Natural killer cell (primary cell): ENCODE measurements at regions of chr10 and their contacts with region 1.

Region 1: GRCh38 chr10:12448729-12449391 is 99.5 kb downstream of the CAMK1D start:
- DNase-seq: peak; percentile 64 to 95
- ATAC-seq: peak; percentile 88 to 94 (median 90)
- H3K4me3 ChIP-seq: peak overlapping the region; percentile 13
- H3K4me3 Mint-ChIP-seq: peak overlapping the region; percentile 79
- H3K27ac ChIP-seq: peak overlapping the region; percentile 66
- H3K27ac Mint-ChIP-seq: peak overlapping the region; percentile 95 to 96
- H3K4me1 ChIP-seq: peaks cover 19% of the 10 kb centered on the region
- H3K4me1 Mint-ChIP-seq: peaks cover 34 to 37% of the 10 kb centered on the region in 2 donors
- H3K27me3 ChIP-seq: no peaks in the 10 kb centered on the region
- H3K27me3 Mint-ChIP-seq: peaks cover 0 to 5% of the 10 kb centered on the region in 2 donors
- CTCF ChIP-seq: no peak

Region 2: DNA sequence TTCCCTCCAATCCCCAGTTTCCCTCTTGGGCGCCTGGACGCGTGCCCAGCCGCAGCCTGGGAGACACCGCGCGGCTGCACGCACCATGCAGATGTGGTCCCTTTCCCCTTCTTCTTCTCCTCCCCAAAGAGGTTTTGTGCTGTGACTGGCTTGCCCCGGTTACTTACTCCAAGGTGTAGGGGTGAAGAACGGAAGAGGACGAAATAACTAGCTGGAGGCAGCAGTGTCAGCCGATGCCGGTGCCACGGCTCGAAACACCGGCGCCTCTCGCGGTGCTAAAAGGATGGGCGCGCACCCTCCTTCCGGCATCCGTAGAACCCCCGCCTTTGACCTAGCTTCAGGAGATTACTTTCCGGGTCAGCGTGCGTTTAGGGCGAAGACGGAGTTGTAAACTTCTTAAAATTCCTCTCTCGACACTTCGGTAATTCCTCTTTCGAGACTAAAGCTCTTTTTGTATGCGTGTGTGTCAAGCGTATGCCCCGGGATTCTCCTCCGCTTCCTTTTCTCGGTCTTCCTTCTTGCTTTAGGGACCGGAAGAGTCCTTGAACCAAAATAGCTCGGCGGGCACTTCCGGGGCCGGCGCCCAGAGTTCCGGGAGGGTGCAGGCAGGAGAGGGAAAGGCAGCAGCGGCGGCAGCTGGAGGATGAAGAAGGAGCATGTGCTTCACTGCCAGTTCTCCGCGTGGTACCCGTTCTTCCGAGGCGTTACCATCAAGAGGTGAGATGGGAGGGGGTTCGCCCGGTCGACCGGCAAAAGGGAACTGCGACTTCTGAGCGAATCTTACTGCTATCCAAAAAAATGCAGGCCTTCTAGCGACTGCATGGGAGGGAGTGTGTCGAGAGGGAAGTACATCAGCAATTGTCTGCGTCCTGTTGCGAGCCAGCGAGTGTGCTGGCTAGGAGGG is 253.0 kb before region 1 on chr10 and contains the starts of genes CDC123 and NUDT5:
- intact Hi-C with region 1: loop called (anchors 2 kb)
- DNase-seq: peak; percentile 76 to 92
- ATAC-seq: peak; percentile 93 to 96 (median 94)
- H3K4me3 ChIP-seq: peak within 1 kb of the TSS; percentile 92
- H3K4me3 Mint-ChIP-seq: peak within 1 kb of the TSS; percentile 98
- H3K27ac ChIP-seq: peak within 1 kb of the TSS; percentile 93
- H3K27ac Mint-ChIP-seq: peak within 1 kb of the TSS; percentile 97 to 99
- H3K4me1 ChIP-seq: peaks cover 20% of the 10 kb centered on the region
- H3K4me1 Mint-ChIP-seq: peaks cover 48 to 55% of the 10 kb centered on the region in 2 donors
- H3K27me3 ChIP-seq: no peaks in the 10 kb centered on the region
- H3K27me3 Mint-ChIP-seq: no peaks in the 10 kb centered on the region
- CTCF ChIP-seq: no peak
- total RNA-seq, gene CDC123: 45.8 to 53.3 (median 47.6) TPM
- total RNA-seq, gene NUDT5: 25.7 to 39.1 (median 29.4) TPM

Region 3: GRCh38 chr10:12264204-12264940 is 184.5 kb before region 1 on chr10:
- intact Hi-C with region 1: loop called (anchors 2 kb)
- DNase-seq: peak; percentile 51 to 82
- ATAC-seq: peak; percentile 41 to 69 (median 51)
- H3K4me3 ChIP-seq: no peak overlapping the region
- H3K4me3 Mint-ChIP-seq: peak overlapping the region; percentile 55
- H3K27ac ChIP-seq: peak overlapping the region; percentile 91
- H3K27ac Mint-ChIP-seq: peak overlapping the region in 1 of 2 donors; percentile 60
- H3K4me1 ChIP-seq: peaks cover 46% of the 10 kb centered on the region
- H3K4me1 Mint-ChIP-seq: peaks cover 25 to 30% of the 10 kb centered on the region in 2 donors
- H3K27me3 ChIP-seq: peaks cover 5% of the 10 kb centered on the region
- H3K27me3 Mint-ChIP-seq: peaks cover 18 to 25% of the 10 kb centered on the region in 2 donors
- CTCF ChIP-seq: peak; percentile 57

Region 4: DNA sequence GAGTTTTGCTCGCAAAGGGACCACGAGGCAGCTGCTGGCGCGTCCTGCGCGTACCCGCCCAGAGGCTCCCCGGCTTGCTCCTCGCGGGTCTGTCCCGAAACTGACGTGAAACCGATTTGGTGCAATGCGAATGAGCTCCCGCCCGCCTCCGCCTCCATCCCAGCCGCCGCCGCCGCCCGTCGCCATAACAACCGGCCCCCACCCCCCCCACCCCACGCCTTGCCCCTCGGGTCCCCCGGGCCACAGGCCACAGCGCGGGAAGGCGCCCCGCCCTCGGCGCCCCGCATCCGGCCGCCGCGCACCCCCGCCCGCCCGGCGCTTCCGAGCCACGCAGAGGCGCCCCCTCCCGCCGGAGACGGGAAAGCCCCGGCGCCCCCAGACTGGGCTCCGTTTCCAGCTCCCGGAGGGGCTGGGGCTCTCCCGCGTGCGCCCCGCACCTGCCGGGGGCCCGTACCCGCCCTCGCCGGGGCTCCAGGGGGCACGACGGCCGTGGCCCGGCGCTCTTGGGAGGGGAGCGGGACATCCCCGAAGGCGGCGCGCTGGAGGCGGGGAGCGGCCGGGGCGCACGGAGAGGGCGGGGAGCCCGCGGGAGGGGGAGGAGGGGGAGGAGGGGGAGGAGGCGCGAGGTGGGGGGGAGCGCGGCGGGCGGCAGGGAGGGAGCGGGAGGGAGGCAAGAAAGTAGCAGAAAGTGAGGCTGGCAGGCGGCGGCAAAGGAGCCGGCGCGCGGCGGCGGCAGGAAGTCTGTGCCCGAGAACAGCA is 99.8 kb before region 1 on chr10 and contains the start of gene CAMK1D:
- intact Hi-C with region 1: loop called (anchors 1 kb)
- DNase-seq: peak; percentile 83 to 94
- ATAC-seq: peak; percentile 71 to 83 (median 71)
- H3K4me3 ChIP-seq: peak within 1 kb of the TSS; percentile 76
- H3K4me3 Mint-ChIP-seq: peak within 1 kb of the TSS; percentile 98
- H3K27ac ChIP-seq: peak within 1 kb of the TSS; percentile 72
- H3K27ac Mint-ChIP-seq: peak within 1 kb of the TSS; percentile 87 to 97
- H3K4me1 ChIP-seq: peaks cover 18% of the 10 kb centered on the region
- H3K4me1 Mint-ChIP-seq: peaks cover 53 to 62% of the 10 kb centered on the region in 2 donors
- H3K27me3 ChIP-seq: no peaks in the 10 kb centered on the region
- H3K27me3 Mint-ChIP-seq: no peaks in the 10 kb centered on the region
- CTCF ChIP-seq: peak; percentile 23
- total RNA-seq, gene CAMK1D: 44.2 to 56.4 (median 49.7) TPM

Region 5: GRCh38 chr10:12369982-12370381 is 78.9 kb before region 1 on chr10:
- intact Hi-C with region 1: loop called (anchors 1 kb)
- DNase-seq: no peak
- ATAC-seq: no peak
- H3K4me3 ChIP-seq: no peak overlapping the region
- H3K4me3 Mint-ChIP-seq: no peak overlapping the region
- H3K27ac ChIP-seq: no peak overlapping the region
- H3K27ac Mint-ChIP-seq: no peak overlapping the region
- H3K4me1 ChIP-seq: peaks cover 19% of the 10 kb centered on the region
- H3K4me1 Mint-ChIP-seq: peaks cover 15 to 16% of the 10 kb centered on the region in 2 donors
- H3K27me3 ChIP-seq: no peaks in the 10 kb centered on the region
- H3K27me3 Mint-ChIP-seq: no peaks in the 10 kb centered on the region
- CTCF ChIP-seq: no peak

Region 6: DNA sequence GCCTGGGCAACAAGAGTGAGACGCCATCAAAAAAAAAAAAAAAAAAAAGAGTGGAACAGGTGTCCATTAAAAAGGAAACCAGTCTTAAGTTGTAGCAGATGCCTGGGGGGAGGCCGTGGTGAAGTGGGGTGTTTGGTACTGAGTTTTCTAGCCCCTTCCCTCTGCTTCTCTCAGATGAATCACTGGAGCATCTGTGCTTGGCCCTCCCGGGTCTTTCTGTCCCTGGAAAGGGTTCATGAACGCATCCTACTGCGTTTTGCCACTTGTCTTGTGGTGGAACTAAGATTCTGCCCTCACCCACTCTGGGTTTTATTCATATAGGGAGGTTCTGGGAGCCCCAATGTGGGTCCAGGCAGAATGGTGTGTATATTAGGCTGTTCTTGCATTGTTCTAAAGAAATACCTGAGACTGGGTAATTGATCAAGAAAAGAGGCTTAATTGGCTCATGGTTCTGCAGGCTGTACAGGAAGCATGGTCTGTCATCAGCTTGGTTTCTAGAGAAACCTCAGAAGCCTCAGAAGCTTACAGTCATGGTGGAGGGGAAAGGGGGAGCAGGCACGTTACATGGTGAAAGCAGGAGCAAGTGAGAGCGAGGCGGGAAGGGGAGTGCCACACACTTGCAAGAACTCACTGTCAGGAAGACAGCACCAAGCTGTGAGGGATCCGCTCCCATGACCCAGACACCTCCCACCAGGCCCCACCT is 36.0 kb before region 1 on chr10:
- intact Hi-C with region 1: loop called (anchors 2 kb)
- DNase-seq: peak; percentile 26 to 68
- ATAC-seq: peak; percentile 77 to 89 (median 79)
- H3K4me3 ChIP-seq: no peak overlapping the region
- H3K4me3 Mint-ChIP-seq: no peak overlapping the region
- H3K27ac ChIP-seq: no peak overlapping the region
- H3K27ac Mint-ChIP-seq: peak overlapping the region in 1 of 2 donors; percentile 62
- H3K4me1 ChIP-seq: peaks cover 8% of the 10 kb centered on the region
- H3K4me1 Mint-ChIP-seq: peaks cover 25 to 26% of the 10 kb centered on the region in 2 donors
- H3K27me3 ChIP-seq: no peaks in the 10 kb centered on the region
- H3K27me3 Mint-ChIP-seq: no peaks in the 10 kb centered on the region
- CTCF ChIP-seq: no peak

Region 7: GRCh38 chr10:12489806-12490205 is 40.9 kb after region 1 on chr10:
- intact Hi-C with region 1: no loop called
- DNase-seq: no peak
- ATAC-seq: no peak
- H3K4me3 ChIP-seq: no peak overlapping the region
- H3K4me3 Mint-ChIP-seq: no peak overlapping the region
- H3K27ac ChIP-seq: no peak overlapping the region
- H3K27ac Mint-ChIP-seq: peak overlapping the region in 1 of 2 donors; percentile 18
- H3K4me1 ChIP-seq: peaks cover 4% of the 10 kb centered on the region
- H3K4me1 Mint-ChIP-seq: peaks cover 36 to 44% of the 10 kb centered on the region in 2 donors
- H3K27me3 ChIP-seq: no peaks in the 10 kb centered on the region
- H3K27me3 Mint-ChIP-seq: no peaks in the 10 kb centered on the region
- CTCF ChIP-seq: no peak

Region 8: GRCh38 chr10:12513775-12514673 is 65.2 kb after region 1 on chr10:
- intact Hi-C with region 1: loop called (anchors 1 kb)
- DNase-seq: peak in 1 of 2 donors; percentile 24
- ATAC-seq: peak; percentile 80 to 90 (median 89)
- H3K4me3 ChIP-seq: no peak overlapping the region
- H3K4me3 Mint-ChIP-seq: peak overlapping the region; percentile 81
- H3K27ac ChIP-seq: peak overlapping the region; percentile 51
- H3K27ac Mint-ChIP-seq: peak overlapping the region; percentile 83 to 87
- H3K4me1 ChIP-seq: peaks cover 53% of the 10 kb centered on the region
- H3K4me1 Mint-ChIP-seq: peaks cover 59 to 63% of the 10 kb centered on the region in 2 donors
- H3K27me3 ChIP-seq: no peaks in the 10 kb centered on the region
- H3K27me3 Mint-ChIP-seq: no peaks in the 10 kb centered on the region
- CTCF ChIP-seq: no peak